AG04449 (cell line): ENCODE measurements at regions of chr19 and their contacts with region 1.

Region 1: DNA sequence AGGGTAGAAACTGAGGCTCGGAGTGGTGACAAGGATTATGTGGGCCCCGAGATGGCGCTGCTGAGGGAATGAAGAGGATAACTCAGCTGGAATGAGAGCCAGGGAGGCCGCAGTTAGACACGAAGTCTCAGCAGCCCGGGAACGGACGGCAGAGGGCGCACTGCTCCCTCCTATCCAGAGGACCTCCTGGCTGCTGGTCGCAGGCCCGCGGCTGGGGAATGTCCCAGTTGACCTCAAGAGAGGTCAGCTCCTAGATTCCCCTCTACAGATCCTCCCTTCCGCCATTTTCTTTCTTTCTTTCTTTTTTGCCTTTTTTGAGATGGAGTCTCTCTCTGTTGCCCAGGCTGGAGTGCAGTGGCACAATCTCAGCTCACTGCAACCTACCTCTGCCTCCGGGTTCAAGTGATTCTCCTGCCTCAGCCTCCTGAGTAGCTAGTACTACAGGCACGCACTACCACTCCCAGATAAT is 24.1 kb upstream of the ASPDH start:
- DNase-seq: peak; percentile 28
- H3K4me3 ChIP-seq: no peak overlapping the region
- CTCF ChIP-seq: peak; percentile 93

Region 2: GRCh38 chr19:50511068-50511822 is 26.6 kb before region 1 on chr19 and contains the start of gene JOSD2:
- CTCF ChIA-PET with region 1: interaction called, 17 read pairs
- POLR2A ChIA-PET with region 1: no interaction called
- DNase-seq: peak; percentile 94
- H3K4me3 ChIP-seq: peak within 1 kb of the TSS; percentile 89
- CTCF ChIP-seq: no peak

Region 3: DNA sequence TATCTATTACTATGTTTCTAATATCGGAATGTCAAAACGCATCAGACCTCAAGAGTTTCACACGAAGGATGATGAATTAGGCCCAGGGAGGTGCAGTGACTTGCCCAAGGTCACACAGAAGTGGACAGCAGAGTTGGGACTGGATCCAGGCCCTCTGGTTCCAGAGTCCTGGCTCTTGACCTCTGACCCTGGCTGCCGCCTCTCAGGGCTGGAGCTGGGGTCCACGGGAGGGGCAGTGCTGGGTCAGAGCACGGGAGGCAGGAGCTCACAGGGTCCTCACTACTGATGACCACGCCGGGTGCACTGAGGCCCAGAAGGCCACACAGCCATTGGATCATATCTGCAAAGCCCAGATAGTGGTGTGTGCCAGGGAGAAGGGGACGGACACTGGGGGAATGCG is 14.9 kb before region 1 on chr19:
- CTCF ChIA-PET with region 1: interaction called, 34 read pairs
- POLR2A ChIA-PET with region 1: no interaction called
- DNase-seq: no peak
- H3K4me3 ChIP-seq: no peak overlapping the region
- CTCF ChIP-seq: no peak